Endothelial cell of umbilical vein (primary cell): ENCODE measurements at regions of chr16 and their contacts with region 1.

Region 1: GRCh38 chr16:53207810-53208752 is 153.3 kb downstream of the CHD9 start:
- DNase-seq: peak; percentile 88
- H3K4me3 ChIP-seq: peak overlapping the region; percentile 34 to 91 (median 70)
- H3K27ac ChIP-seq: peak overlapping the region; percentile 92
- H3K4me1 ChIP-seq: peaks cover 41% of the 10 kb centered on the region
- H3K27me3 ChIP-seq: no peaks in the 10 kb centered on the region
- CTCF ChIP-seq: peak; percentile 33 to 51
- POLR2A ChIP-seq: peak; percentile 53

Region 2: GRCh38 chr16:53130159-53131049 is 77.7 kb before region 1 on chr16:
- CTCF ChIA-PET with region 1: interaction called, 8 read pairs
- POLR2A ChIA-PET with region 1: no interaction called
- dilution Hi-C with region 1: no loop called
- intact Hi-C with region 1: loop called (anchors 1 kb)
- DNase-seq: peak; percentile 96
- H3K4me3 ChIP-seq: peak overlapping the region; percentile 71 to 92 (median 74)
- H3K27ac ChIP-seq: peak overlapping the region; percentile 89
- H3K4me1 ChIP-seq: peaks cover 18% of the 10 kb centered on the region
- H3K27me3 ChIP-seq: no peaks in the 10 kb centered on the region
- CTCF ChIP-seq: peak; percentile 55 to 63
- POLR2A ChIP-seq: peak; percentile 68

Region 3: GRCh38 chr16:53159781-53160436 is 48.2 kb before region 1 on chr16:
- CTCF ChIA-PET with region 1: interaction called, 9 read pairs
- POLR2A ChIA-PET with region 1: no interaction called
- dilution Hi-C with region 1: no loop called
- intact Hi-C with region 1: loop called (anchors 5 kb)
- DNase-seq: peak; percentile 70
- H3K4me3 ChIP-seq: no peak overlapping the region
- H3K27ac ChIP-seq: no peak overlapping the region
- H3K4me1 ChIP-seq: no peaks in the 10 kb centered on the region
- H3K27me3 ChIP-seq: no peaks in the 10 kb centered on the region
- CTCF ChIP-seq: peak; percentile 54 to 66
- POLR2A ChIP-seq: no peak